ENCODE measurements at regions of chr15 and their contacts with region 1.

Region 1: GRCh38 chr15:40115670-40116093 is 7.0 kb upstream of the BMF start:
- DNase-seq: peak in 1 of 2 donors; percentile 48
- ATAC-seq: peak in 6 of 8 donors; percentile 52 to 78 (median 56)
- H3K4me3 ChIP-seq: no peak overlapping the region
- H3K27ac ChIP-seq: no peak overlapping the region
- H3K4me1 ChIP-seq: peaks cover 0 to 7% (median 0%) of the 10 kb centered on the region in 9 donors
- H3K27me3 ChIP-seq: peaks cover 0 to 8% (median 0%) of the 10 kb centered on the region in 7 donors
- CTCF ChIP-seq: no peak

Region 2: DNA sequence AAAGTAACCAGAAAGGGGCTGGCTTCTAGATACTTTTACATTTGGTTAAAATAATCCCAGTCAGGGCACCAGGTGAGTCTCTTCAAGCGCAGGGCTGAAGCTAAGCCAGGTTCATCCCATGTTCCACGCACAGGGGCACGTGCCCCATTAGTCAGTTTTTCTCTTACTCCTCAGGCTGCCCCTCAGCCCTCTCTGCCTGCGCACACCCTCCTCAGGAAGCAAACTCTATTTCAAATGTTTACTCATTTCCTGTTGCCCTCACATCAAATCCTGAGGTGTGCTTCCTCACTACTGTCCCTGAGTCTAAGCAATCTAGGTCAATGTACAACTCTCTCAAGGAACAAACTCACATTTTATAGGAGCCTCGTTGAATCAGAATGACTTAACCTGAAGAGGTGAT is 486.3 kb before region 1 on chr15:
- intact Hi-C with region 1: no loop called
- DNase-seq: no peak
- ATAC-seq: no peak
- H3K4me3 ChIP-seq: no peak overlapping the region
- H3K27ac ChIP-seq: peak overlapping the region in 9 of 10 donors; percentile 69 to 88 (median 81)
- H3K4me1 ChIP-seq: peaks cover 19 to 65% (median 42%) of the 10 kb centered on the region in 9 donors
- H3K27me3 ChIP-seq: no peaks in the 10 kb centered on the region
- CTCF ChIP-seq: no peak

Region 3: GRCh38 chr15:40155270-40155910 is 39.7 kb after region 1 on chr15:
- intact Hi-C with region 1: loop called in 1 of 10 experiments (anchors 5 kb)
- DNase-seq: no peak
- ATAC-seq: no peak
- H3K4me3 ChIP-seq: no peak overlapping the region
- H3K27ac ChIP-seq: no peak overlapping the region
- H3K4me1 ChIP-seq: peaks cover 0 to 2% (median under 1%) of the 10 kb centered on the region in 9 donors
- H3K27me3 ChIP-seq: no peaks in the 10 kb centered on the region
- CTCF ChIP-seq: no peak

Region 4: DNA sequence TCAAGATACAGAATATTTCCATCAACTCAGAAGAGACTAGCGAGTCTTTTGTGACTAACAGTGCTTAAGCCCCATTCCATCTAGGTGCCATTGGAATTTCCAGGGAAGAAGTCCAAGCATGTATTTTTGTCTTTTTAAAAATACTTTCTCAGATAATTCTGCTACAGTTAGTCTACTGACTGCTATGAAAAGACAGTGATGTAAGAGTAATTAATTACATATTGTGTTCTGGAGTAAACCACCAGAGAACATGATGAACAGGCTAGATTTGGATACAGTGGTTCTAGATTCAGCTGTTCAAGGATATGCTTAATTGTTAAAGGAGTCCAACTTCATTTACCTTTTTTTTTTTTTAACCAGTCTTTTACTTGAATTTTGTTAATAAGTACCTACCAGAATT is 88.4 kb after region 1 on chr15:
- intact Hi-C with region 1: loop called in 1 of 10 experiments (anchors 10 kb)
- DNase-seq: no peak
- ATAC-seq: peak in 2 of 8 donors; percentile 55 to 66
- H3K4me3 ChIP-seq: no peak overlapping the region
- H3K27ac ChIP-seq: no peak overlapping the region
- H3K4me1 ChIP-seq: no peaks in the 10 kb centered on the region
- H3K27me3 ChIP-seq: no peaks in the 10 kb centered on the region
- CTCF ChIP-seq: no peak